SK-N-SH (cell line): ENCODE measurements at regions of chr7 and their contacts with region 1.

Region 1: DNA sequence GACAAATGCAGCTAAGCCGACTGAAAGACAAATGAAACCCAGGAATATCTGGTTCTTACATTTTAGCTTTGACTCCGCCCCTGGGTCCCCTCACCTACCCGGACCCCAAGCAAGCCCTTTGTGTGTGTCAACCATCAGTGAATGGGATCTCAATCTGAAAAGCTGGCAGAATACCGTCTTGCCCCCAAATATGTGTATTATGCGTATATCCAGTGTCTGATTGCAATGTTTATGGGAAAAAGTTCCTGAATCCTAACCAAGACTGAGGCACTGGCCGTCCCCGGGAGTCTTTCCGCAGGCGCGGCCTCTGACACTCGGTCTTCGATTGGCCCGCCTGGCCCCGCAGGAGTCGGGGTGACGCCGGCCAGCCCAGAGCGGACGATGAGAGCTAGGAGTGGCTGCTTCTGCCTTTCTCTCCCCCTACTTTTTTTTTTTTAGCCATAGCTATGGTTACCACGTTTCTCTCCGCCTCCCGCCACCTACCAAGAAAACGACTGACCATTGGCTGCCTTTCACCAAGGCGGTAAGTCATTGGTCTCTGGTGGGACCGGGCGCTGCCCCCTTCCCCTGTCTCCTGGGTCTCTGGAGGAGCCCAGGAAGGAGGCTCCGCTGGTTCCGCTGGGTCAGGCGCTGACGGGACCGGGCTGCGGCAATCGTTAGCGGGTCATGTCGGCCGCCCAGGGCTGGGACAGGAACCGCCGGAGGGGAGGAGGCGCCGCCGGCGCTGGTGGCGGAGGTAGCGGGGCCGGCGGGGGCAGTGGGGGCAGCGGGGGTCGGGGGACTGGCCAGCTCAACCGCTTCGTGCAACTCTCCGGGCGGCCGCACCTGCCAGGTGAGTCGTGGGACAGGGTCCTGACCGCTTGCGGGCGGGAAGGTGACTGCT is at the start of gene KLHDC10:
- DNase-seq: peak; percentile 99
- H3K4me3 ChIP-seq: peak within 1 kb of the TSS; percentile 72 to 90
- H3K27ac ChIP-seq: peak within 1 kb of the TSS; percentile 60 to 82
- H3K4me1 ChIP-seq: peaks cover 0 to 14% of the 10 kb centered on the region in 2 experiments; a peak in 2 of 4 replicates
- H3K27me3 ChIP-seq: no peaks in the 10 kb centered on the region
- CTCF ChIP-seq: no peak
- EP300 ChIP-seq: no peak; a peak in 2 of 4 replicates
- RAD21 ChIP-seq: peak; percentile 11; the same call in 1 of the 2 replicates
- polyA plus RNA-seq, gene KLHDC10: 15.9 and 17.8 TPM in 2 replicates

Region 2: GRCh38 chr7:130084037-130084875 is 14.0 kb after region 1 on chr7:
- CTCF ChIA-PET with region 1: interaction called, 35 read pairs
- POLR2A ChIA-PET with region 1: interaction called, 3 read pairs
- DNase-seq: no peak
- H3K4me3 ChIP-seq: no peak overlapping the region
- H3K27ac ChIP-seq: no peak overlapping the region
- H3K4me1 ChIP-seq: peaks cover 0 to 11% of the 10 kb centered on the region in 2 experiments; a peak in 1 of 4 replicates
- H3K27me3 ChIP-seq: no peaks in the 10 kb centered on the region
- CTCF ChIP-seq: peak; percentile 66
- EP300 ChIP-seq: no peak
- RAD21 ChIP-seq: no peak

Region 3: GRCh38 chr7:130154501-130155317 is 84.5 kb after region 1 on chr7:
- CTCF ChIA-PET with region 1: interaction called, 20 read pairs
- POLR2A ChIA-PET with region 1: no interaction called
- DNase-seq: peak; percentile 98
- H3K4me3 ChIP-seq: no peak overlapping the region; a peak in 1 of 4 replicates
- H3K27ac ChIP-seq: peak overlapping the region in 1 of 2 experiments; percentile 48; a peak in 2 of 4 replicates
- H3K4me1 ChIP-seq: peaks cover 0 to 16% of the 10 kb centered on the region in 2 experiments; a peak in 1 of 4 replicates
- H3K27me3 ChIP-seq: no peaks in the 10 kb centered on the region
- CTCF ChIP-seq: peak; percentile 45
- EP300 ChIP-seq: peak in 1 of 2 experiments; percentile 71; a peak in 2 of 4 replicates
- RAD21 ChIP-seq: no peak; the same call in 1 of the 2 replicates

Region 4: DNA sequence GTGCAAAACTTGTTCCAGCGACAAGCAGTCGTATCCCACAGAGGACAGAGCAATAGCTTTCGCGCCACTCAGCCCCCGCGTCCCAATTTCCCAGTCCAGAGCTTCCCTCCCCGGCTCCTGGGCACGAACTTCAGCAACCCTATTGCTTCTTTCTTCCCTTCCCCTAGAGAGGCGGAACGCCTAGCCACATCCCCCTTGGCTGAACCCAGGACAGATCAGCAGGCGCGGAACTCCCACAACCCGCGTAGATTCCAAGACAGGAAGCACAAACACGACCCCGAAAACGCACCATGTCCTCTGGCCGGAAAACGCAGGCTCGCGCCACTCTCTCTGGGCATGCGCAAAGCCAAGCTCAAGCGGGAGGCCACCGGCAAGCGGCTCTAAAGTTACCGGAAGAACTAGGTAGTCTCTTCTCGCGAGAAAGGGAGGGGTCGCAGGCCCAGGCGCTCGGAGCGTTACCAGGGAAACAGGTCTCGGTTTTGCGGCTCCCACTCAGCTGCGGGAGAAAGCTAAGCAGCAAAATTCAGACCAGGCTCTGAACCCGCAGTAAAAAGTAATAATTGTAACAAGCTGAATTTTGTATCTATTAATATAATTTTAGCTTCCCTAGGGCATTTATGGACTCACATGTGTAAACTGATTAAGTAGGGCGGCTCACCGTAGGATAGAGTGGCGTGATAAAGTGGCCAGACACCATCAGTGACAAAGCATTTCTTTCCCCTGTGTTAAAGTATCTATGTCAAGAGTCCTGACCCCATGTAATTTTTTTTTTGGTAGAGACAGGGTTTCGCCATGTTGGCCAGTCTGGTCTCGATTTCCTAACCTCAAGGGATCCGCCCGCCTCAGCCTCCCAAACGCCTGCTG is 135.1 kb after region 1 on chr7 and contains the start of gene TMEM209:
- CTCF ChIA-PET with region 1: interaction called, 13 read pairs
- POLR2A ChIA-PET with region 1: interaction called, 14 read pairs
- DNase-seq: peak; percentile 98
- H3K4me3 ChIP-seq: peak within 1 kb of the TSS; percentile 78 to 91
- H3K27ac ChIP-seq: peak within 1 kb of the TSS; percentile 91 to 99
- H3K4me1 ChIP-seq: peaks cover 0 to 8% of the 10 kb centered on the region in 2 experiments; a peak in 2 of 4 replicates
- H3K27me3 ChIP-seq: no peaks in the 10 kb centered on the region
- CTCF ChIP-seq: no peak
- EP300 ChIP-seq: no peak; a peak in 1 of 4 replicates
- RAD21 ChIP-seq: peak; percentile 26
- polyA plus RNA-seq, gene TMEM209: 14.9 and 18.2 TPM in 2 replicates

Region 5: GRCh38 chr7:130721486-130722280 is 651.5 kb after region 1 on chr7:
- CTCF ChIA-PET with region 1: interaction called, 37 read pairs
- POLR2A ChIA-PET with region 1: interaction called, 3 read pairs
- DNase-seq: peak; percentile 80
- H3K4me3 ChIP-seq: no peak overlapping the region
- H3K27ac ChIP-seq: no peak overlapping the region
- H3K4me1 ChIP-seq: no peaks in the 10 kb centered on the region; a peak in 1 of 4 replicates
- H3K27me3 ChIP-seq: peaks cover 27% of the 10 kb centered on the region; the same call in 1 of the 2 replicates
- CTCF ChIP-seq: peak; percentile 84
- EP300 ChIP-seq: no peak
- RAD21 ChIP-seq: peak; percentile 99

Region 6: DNA sequence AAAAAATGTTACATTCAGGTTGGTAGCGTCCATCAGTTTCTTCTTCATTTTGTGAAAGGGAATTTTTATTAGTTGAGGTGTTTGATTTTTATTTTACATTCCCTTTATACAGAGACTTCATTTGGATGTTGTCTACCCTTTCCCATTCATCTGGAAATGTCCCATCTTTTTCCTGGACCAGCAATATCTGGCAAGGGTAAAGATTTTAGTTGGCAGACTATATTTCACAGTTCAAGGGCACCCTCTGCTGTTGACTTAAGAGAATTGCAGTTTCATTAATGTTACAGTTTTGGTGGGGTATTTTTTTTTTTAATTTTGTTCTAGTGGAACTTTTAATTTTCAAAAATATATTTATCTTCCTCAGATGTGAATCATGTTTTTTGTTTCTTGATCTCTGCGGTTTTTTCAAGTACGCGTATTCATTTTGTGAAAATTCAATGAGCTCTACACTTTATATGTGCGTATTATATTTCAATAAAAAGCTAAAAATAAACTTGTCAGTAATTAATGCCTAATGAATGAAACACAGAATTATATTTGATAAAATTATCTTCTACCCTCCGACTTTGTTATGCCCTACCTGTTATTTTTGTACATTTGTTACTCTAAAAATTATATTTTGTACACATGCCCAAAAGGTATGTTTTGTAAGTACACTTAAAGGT is 761.7 kb after region 1 on chr7:
- CTCF ChIA-PET with region 1: interaction called, 14 read pairs
- POLR2A ChIA-PET with region 1: no interaction called
- DNase-seq: peak; percentile 74
- H3K4me3 ChIP-seq: no peak overlapping the region; a peak in 1 of 4 replicates
- H3K27ac ChIP-seq: no peak overlapping the region
- H3K4me1 ChIP-seq: no peaks in the 10 kb centered on the region
- H3K27me3 ChIP-seq: no peaks in the 10 kb centered on the region
- CTCF ChIP-seq: peak; percentile 97
- EP300 ChIP-seq: no peak
- RAD21 ChIP-seq: peak; percentile 95